ENCODE measurements at regions of chr17 and their contacts with region 1.

Region 1: DNA sequence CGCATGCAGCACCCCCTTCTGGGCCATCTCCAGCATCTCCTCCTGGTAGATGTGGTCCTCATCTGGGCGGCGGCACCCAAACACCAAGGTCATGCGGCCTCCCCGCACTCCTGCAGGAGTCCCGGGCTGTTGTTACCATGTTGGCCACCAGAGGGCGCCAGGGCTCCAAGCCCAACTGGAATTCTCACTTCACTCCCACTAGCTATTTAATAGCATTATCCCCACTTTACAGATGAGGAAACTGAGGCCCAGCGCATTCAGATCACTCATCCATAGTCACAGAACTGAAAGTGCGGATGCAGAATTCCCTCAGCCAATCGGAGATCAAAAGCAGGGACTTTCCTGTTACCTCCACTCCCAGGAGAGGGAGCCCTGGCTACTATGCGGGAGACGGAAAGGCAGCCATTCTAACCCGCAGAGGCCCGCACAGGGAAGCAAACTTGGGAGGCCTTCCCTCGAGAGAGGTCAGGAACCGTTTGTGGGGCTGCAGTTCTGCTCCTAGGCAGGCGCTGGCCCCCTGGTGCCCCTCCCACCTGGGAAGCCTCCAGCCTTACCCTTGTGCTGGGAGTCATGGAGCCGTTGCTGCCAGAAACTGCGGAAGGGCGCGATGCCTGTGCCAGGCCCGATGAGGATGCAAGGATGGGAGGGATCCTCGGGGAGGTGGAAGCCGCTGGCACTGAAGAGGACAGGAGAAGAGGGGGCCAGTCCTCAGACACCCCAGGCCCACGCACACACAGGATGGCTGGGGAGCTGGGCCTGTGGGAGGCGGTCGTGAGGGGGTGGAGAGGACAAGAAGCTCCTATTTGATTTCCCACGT is 40.1 kb downstream of the NOS2 start:
- DNase-seq: peak; percentile 34 to 96
- H3K4me3 ChIP-seq: no peak overlapping the region
- H3K27ac ChIP-seq: no peak overlapping the region
- H3K4me1 ChIP-seq: no peaks in the 10 kb centered on the region
- H3K27me3 ChIP-seq: no peaks in the 10 kb centered on the region
- CTCF ChIP-seq: peak; percentile 77 to 80 (median 78)
- EP300 ChIP-seq: no peak
- POLR2A ChIP-seq: no peak
- RAD21 ChIP-seq: peak; percentile 75

Region 2: DNA sequence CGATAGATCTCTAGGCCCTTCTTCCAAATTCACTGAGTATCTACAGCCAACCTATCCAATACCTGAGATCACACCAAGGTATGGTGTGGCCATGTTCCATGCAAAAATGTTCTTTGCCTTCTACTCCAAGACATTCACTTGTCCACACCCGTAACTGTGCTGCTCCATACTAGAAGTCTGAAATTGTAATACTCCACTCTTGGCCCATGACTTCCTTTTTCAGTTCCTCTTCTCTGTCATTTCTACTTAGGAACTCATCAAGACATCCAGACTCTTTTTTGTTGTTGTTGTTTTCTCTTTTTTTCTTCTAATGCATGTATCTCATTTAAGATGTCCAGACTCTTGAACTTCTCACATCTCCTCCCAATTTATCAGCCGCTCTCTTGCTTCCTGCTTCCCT is 346.5 kb before region 1 on chr17:
- CTCF ChIA-PET with region 1: no interaction called
- POLR2A ChIA-PET with region 1: no interaction called
- DNase-seq: no peak
- H3K4me3 ChIP-seq: no peak overlapping the region
- H3K27ac ChIP-seq: no peak overlapping the region
- H3K4me1 ChIP-seq: no peaks in the 10 kb centered on the region; a peak in 1 of 7 replicates
- H3K27me3 ChIP-seq: 0 out of 7 replicates have a peak, but pooled peaks cover 0 to 4% (median 0%) of the 10 kb centered on the region in 4 experiments
- CTCF ChIP-seq: no peak
- EP300 ChIP-seq: no peak
- POLR2A ChIP-seq: no peak
- RAD21 ChIP-seq: no peak

Region 3: DNA sequence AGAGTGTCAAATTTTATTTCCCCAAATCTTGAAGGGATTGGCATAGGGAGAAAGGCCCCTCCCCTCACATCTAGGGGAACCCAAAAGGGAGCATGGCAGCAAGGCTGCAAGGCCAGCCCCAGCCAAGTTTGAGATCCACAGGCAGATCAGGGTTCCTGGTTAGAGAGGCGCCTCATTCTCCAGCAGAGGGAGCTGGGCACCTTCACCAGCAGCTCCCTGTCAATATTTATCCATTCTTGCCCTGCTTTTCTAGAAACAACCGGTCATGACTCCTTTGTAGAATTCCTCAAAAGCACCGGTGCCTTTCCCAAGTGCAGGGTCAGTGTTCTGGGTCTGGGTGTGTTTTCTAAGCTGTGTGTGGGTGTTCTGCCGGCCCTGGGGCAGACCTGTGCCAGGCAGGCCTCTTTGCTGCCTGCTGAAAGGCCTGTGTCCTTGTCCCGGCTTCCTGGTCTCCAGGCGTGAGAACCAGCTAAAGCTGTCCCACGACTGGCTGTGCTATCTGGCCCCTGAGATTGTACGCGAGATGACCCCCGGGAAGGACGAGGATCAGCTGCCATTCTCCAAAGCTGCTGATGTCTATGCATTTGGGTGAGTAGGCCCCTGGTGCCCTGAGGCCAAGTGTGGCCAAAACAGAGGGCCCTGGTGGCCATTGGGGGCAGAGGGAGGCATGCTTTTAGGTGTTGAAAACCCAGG is 150.5 kb before region 1 on chr17:
- CTCF ChIA-PET with region 1: interaction called, 20 read pairs
- POLR2A ChIA-PET with region 1: no interaction called
- DNase-seq: no peak
- H3K4me3 ChIP-seq: no peak overlapping the region
- H3K27ac ChIP-seq: no peak overlapping the region
- H3K4me1 ChIP-seq: no peaks in the 10 kb centered on the region
- H3K27me3 ChIP-seq: no peaks in the 10 kb centered on the region
- CTCF ChIP-seq: peak; percentile 61 to 69 (median 65)
- EP300 ChIP-seq: no peak
- POLR2A ChIP-seq: no peak
- RAD21 ChIP-seq: peak; percentile 64 to 71

Region 4: DNA sequence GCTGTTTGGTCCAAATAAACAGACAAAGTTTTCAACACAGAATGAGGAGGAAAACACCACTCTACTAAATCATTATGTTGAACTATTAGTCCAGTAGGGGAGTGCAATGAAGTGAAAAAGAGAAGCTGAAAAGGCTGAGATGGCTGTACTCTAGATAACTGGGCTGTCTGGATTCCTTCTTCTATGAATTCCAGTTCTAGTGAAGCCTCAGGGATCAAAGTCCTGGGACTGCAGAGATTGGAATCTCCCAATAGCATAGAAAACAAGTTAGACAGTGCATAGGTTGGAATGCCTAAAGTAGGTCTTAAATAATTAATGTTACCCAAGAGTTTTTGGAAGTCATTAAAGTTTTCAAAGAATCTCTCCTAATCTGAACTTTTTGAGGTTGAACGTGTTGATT is 69.4 kb before region 1 on chr17:
- CTCF ChIA-PET with region 1: interaction called, 13 read pairs
- POLR2A ChIA-PET with region 1: no interaction called
- DNase-seq: no peak
- H3K4me3 ChIP-seq: no peak overlapping the region
- H3K27ac ChIP-seq: no peak overlapping the region
- H3K4me1 ChIP-seq: no peaks in the 10 kb centered on the region
- H3K27me3 ChIP-seq: no peaks in the 10 kb centered on the region
- CTCF ChIP-seq: no peak
- EP300 ChIP-seq: no peak
- POLR2A ChIP-seq: no peak
- RAD21 ChIP-seq: no peak

Region 5: DNA sequence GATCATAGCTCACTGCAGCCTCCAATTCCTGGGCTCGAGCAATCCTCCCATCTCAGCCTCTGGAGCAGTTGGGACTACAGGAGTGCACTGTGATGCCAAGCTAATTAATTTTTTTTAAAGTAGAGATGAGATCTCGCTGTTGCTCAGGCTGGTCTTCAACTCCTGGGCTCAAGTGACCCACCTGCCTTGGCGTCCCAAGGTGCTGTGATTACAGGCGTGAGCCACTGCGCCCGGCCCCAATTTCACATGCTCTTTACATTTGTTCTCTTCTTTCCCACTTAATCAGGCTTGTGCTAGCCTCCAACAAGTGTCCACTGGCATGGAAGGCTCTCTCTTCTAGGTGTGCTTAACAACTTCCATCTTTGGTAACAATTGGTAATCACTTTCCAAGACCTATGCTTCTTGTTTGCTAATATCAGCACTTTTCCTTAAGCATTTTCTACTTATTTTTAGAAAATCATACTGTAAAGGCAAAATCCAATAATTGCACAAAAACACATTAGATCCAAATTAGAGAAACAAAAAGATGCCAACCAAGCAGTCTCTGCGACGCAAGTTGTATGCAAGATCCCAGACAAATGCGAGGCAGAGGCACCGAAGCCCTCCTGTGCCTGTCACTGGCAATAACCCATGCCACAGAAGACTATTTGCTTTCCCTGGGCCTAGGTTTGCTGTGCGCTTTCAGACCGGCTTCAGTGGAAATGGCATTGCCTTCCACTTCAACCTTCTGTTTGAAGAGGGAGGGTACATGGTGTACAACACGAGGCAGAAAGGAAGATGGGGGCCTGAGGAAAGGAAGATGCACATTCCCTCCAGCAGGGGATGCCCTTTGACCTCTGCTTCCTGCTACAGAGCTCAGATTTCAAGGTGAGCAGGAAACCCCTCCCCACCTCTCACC is 12.6 kb before region 1 on chr17:
- CTCF ChIA-PET with region 1: interaction called, 66 read pairs
- POLR2A ChIA-PET with region 1: no interaction called
- DNase-seq: peak; percentile 43 to 81
- H3K4me3 ChIP-seq: no peak overlapping the region
- H3K27ac ChIP-seq: no peak overlapping the region
- H3K4me1 ChIP-seq: 0 out of 7 replicates have a peak, but pooled peaks cover 0 to 2% (median 0%) of the 10 kb centered on the region in 4 experiments
- H3K27me3 ChIP-seq: no peaks in the 10 kb centered on the region; a peak in 1 of 7 replicates
- CTCF ChIP-seq: peak; percentile 62 to 90 (median 72)
- EP300 ChIP-seq: peak in 1 of 2 experiments; percentile 49; a peak in 1 of 3 replicates
- POLR2A ChIP-seq: no peak
- RAD21 ChIP-seq: peak; percentile 28 to 32; a peak in 2 of 4 replicates

Region 6: GRCh38 chr17:27778193-27778592 is 17.9 kb after region 1 on chr17:
- CTCF ChIA-PET with region 1: interaction called, 16 read pairs
- POLR2A ChIA-PET with region 1: no interaction called
- DNase-seq: no peak
- H3K4me3 ChIP-seq: no peak overlapping the region
- H3K27ac ChIP-seq: no peak overlapping the region
- H3K4me1 ChIP-seq: peaks cover 0 to 6% (median 4%) of the 10 kb centered on the region in 4 experiments; a peak in 6 of 7 replicates
- H3K27me3 ChIP-seq: no peaks in the 10 kb centered on the region
- CTCF ChIP-seq: no peak
- EP300 ChIP-seq: no peak
- POLR2A ChIP-seq: no peak
- RAD21 ChIP-seq: no peak

Region 7: DNA sequence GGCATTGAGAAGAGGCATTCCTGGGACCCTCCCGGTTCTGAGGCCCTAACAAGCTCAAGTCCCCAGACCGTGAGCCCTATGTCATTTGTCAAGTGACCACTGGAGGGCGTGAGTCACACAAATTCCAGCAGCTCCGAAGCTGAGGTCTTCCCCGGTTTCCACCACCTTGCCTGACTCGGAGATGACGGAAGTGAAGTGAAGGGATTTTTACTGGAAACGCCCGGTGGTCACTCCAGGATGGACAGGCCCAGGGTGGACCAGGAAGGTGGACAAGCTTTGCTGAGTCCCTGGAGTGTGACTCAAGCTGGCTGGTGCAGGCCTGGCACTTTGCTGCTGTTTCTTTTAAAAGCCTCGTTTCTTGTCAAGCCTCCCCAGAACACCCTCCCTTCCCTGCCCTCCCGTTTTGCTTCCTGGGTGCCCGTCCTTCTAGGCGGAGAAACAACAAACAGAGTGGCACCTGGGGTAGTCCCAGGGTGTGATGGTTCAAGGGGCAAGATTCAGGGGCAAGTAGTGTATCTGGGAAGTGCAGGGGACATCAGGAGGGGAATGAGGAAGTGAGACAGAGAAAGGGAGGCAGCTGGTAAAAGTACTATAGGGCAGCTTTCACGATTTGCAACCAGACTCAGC is 45.4 kb after region 1 on chr17:
- CTCF ChIA-PET with region 1: interaction called, 61 read pairs
- POLR2A ChIA-PET with region 1: no interaction called
- DNase-seq: peak; percentile 59 to 91
- H3K4me3 ChIP-seq: peak overlapping the region in 1 of 4 experiments; percentile 29; a peak in 1 of 8 replicates
- H3K27ac ChIP-seq: no peak overlapping the region
- H3K4me1 ChIP-seq: peaks cover 0 to 8% (median 4%) of the 10 kb centered on the region in 4 experiments
- H3K27me3 ChIP-seq: no peaks in the 10 kb centered on the region
- CTCF ChIP-seq: peak; percentile 76 to 97 (median 92)
- EP300 ChIP-seq: no peak
- POLR2A ChIP-seq: no peak
- RAD21 ChIP-seq: peak; percentile 89 to 94

Measured in H1 (cell line).